Endothelial cell of umbilical vein (primary cell): ENCODE measurements at regions of chr3 and their contacts with region 1.

Region 1: DNA sequence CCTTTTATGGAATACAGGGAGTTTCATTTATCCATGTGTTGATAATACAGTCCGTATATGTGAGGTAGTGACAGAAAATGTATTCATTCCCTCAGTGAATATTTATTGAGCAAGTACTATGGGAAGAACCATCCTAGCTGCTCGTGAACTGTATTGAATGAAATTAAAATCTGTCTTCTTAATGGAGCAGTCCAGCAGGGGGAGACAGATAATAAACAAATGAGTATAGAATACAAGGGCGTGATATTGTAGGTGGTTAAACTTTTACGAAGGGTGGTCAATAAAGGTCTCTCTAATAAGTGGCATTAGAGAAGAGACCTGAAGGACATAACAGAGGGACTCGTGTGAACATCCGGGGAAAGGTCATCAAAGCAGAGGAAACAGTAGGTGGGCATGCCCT is 62.7 kb upstream of the OSTN start:
- DNase-seq: peak; percentile 63
- H3K4me3 ChIP-seq: no peak overlapping the region
- H3K27ac ChIP-seq: no peak overlapping the region
- H3K4me1 ChIP-seq: peaks cover 5% of the 10 kb centered on the region
- H3K27me3 ChIP-seq: no peaks in the 10 kb centered on the region
- CTCF ChIP-seq: peak; percentile 30 to 37
- POLR2A ChIP-seq: no peak

Region 2: GRCh38 chr3:191220908-191221307 is 84.6 kb after region 1 on chr3:
- CTCF ChIA-PET with region 1: no interaction called
- POLR2A ChIA-PET with region 1: no interaction called
- dilution Hi-C with region 1: no loop called
- intact Hi-C with region 1: loop called (anchors 5 kb)
- DNase-seq: no peak
- H3K4me3 ChIP-seq: no peak overlapping the region
- H3K27ac ChIP-seq: no peak overlapping the region
- H3K4me1 ChIP-seq: no peaks in the 10 kb centered on the region
- H3K27me3 ChIP-seq: no peaks in the 10 kb centered on the region
- CTCF ChIP-seq: no peak
- POLR2A ChIP-seq: no peak

Region 3: DNA sequence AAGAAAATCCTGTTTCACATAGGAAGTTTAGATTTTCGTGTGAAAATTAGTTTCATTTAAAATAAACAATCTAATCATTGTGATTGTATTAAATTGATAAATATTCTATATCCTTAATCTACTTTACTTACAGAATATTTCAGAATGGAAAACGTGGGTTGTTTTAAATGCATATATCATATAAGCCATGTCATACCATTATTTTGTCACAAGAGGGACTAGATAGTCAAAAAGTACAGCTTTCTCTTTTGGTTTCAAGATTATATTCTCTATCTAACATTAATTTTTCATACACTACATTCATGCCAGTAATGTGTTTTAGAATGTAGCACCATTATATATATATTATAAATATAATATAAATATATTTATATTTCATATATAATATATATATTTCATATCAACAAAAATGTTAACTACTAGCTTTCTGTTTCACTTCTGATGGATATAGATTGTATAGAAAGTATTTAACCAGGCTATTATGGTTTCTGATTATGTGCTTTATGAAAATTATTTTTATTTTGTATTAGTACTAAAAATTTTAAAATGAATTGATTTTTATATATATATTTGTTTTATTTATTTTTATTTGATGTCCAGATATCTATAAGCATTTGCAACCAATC is 108.0 kb after region 1 on chr3:
- CTCF ChIA-PET with region 1: interaction called, 20 read pairs
- POLR2A ChIA-PET with region 1: interaction called, 3 read pairs
- dilution Hi-C with region 1: no loop called
- intact Hi-C with region 1: loop called (anchors 1 kb)
- DNase-seq: peak; percentile 39
- H3K4me3 ChIP-seq: no peak overlapping the region
- H3K27ac ChIP-seq: no peak overlapping the region
- H3K4me1 ChIP-seq: peaks cover 18% of the 10 kb centered on the region
- H3K27me3 ChIP-seq: no peaks in the 10 kb centered on the region
- CTCF ChIP-seq: peak; percentile 15 to 19
- POLR2A ChIP-seq: no peak

Region 4: DNA sequence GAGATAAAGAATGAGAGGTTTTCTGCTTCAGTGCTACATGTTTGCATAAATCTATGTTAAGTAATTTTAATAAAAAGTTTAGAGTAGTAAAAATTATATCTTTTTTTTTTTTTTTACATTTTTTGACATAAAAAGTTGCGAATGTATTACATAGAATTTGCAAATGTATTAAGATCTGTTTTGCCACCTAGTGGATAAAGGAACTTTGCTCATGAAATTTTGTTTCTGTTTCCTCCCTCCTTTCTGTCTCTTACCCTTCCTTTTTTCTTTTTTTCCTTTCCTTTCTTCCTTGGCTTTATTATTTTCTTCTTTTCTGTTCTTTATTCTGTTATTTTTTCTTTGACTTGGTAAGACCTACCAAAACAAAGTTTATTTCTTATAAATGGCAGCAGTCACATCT is 252.5 kb after region 1 on chr3:
- CTCF ChIA-PET with region 1: interaction called, 6 read pairs
- POLR2A ChIA-PET with region 1: no interaction called
- dilution Hi-C with region 1: no loop called
- intact Hi-C with region 1: loop called (anchors 1 kb)
- DNase-seq: no peak
- H3K4me3 ChIP-seq: no peak overlapping the region
- H3K27ac ChIP-seq: no peak overlapping the region
- H3K4me1 ChIP-seq: no peaks in the 10 kb centered on the region
- H3K27me3 ChIP-seq: no peaks in the 10 kb centered on the region
- CTCF ChIP-seq: peak in 1 of 2 donors; percentile 8
- POLR2A ChIP-seq: no peak

Region 5: GRCh38 chr3:191412759-191413158 is 276.4 kb after region 1 on chr3:
- CTCF ChIA-PET with region 1: no interaction called
- POLR2A ChIA-PET with region 1: no interaction called
- dilution Hi-C with region 1: no loop called
- intact Hi-C with region 1: loop called (anchors 2 kb)
- DNase-seq: peak; percentile 97
- H3K4me3 ChIP-seq: no peak overlapping the region
- H3K27ac ChIP-seq: peak overlapping the region; percentile 25
- H3K4me1 ChIP-seq: peaks cover 11% of the 10 kb centered on the region
- H3K27me3 ChIP-seq: no peaks in the 10 kb centered on the region
- CTCF ChIP-seq: no peak
- POLR2A ChIP-seq: no peak

Region 6: GRCh38 chr3:191809326-191809949 is 673.1 kb after region 1 on chr3:
- CTCF ChIA-PET with region 1: no interaction called
- POLR2A ChIA-PET with region 1: no interaction called
- dilution Hi-C with region 1: no loop called
- intact Hi-C with region 1: loop called (anchors 5 kb)
- DNase-seq: no peak
- H3K4me3 ChIP-seq: no peak overlapping the region
- H3K27ac ChIP-seq: no peak overlapping the region
- H3K4me1 ChIP-seq: no peaks in the 10 kb centered on the region
- H3K27me3 ChIP-seq: no peaks in the 10 kb centered on the region
- CTCF ChIP-seq: no peak
- POLR2A ChIP-seq: no peak

Region 7: DNA sequence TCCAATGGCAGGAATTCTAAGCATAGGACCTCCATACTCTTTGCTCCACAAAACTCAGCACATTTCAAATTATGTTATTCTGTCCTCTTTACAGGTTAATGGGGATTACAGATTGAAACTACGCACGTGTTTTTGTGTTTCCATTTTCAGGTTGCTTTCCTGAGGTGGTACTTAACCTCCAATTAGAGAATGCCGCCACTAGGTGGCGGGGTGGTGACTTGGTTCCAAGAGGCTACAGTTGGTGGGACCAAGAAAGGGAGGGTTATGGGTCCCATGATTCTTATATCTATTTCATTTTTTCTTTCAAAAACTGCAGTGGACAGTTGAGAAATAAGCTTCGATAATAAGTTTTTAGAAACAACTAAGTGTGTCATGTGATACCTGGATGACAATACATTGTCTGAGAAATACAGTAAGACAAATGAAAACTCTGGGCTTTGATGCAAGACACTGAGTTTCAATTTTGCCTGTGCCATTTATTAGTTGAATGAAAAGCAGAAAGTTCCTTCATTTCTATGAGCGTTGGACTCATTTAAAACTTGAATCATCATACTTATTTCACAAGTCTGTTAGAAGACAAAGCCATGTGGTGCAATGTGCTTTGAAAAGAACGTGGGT is 1052.0 kb after region 1 on chr3:
- CTCF ChIA-PET with region 1: no interaction called
- POLR2A ChIA-PET with region 1: no interaction called
- dilution Hi-C with region 1: no loop called
- intact Hi-C with region 1: loop called (anchors 10 kb)
- DNase-seq: peak; percentile 46
- H3K4me3 ChIP-seq: no peak overlapping the region
- H3K27ac ChIP-seq: no peak overlapping the region
- H3K4me1 ChIP-seq: peaks cover 13% of the 10 kb centered on the region
- H3K27me3 ChIP-seq: no peaks in the 10 kb centered on the region
- CTCF ChIP-seq: peak; percentile 72 to 73
- POLR2A ChIP-seq: no peak